ENCODE measurements at regions of chr15 and their contacts with region 1.

Region 1: DNA sequence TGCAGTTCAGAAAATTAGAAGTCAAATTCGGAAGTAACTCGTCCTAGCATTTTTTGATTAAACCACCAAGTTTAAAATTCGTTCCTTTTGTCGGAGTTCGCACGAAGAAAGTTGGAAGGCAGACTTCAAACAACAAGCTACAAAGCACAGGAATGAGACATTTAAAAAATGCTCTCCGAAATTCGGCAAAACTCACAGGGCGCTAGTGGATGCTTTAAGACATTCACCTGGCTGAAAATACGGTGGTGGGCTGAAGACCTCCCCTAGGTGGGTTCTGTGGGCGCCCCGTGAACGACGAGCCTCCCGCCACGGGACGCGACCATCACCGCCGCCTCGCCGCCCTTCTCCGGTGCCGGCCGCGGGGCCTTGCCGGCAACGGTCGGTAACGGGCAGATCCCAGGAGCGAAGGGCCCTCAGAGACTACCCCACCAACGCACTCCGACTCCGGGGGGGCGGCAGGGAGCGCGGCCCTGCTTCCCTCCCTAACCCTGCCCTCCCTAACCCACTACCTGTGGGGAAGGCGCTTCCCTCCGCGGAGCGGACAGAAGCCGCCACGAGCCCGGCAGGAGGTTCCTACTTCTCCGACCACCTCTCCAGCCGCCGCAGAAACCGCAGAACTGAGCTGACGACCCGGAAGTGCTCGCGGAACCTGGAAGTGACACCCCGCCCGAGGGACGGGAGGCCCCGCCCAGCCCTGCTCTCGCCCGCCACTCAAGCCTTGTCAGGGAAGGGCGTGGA is at the start of gene GTF2A2:
- DNase-seq: peak; percentile 98
- ATAC-seq: peak; percentile 100
- H3K4me3 Mint-ChIP-seq: no peak within 1 kb of the TSS
- H3K27ac Mint-ChIP-seq: peak within 1 kb of the TSS; percentile 90
- H3K4me1 Mint-ChIP-seq: peaks cover 8% of the 10 kb centered on the region
- H3K27me3 Mint-ChIP-seq: no peaks in the 10 kb centered on the region
- total RNA-seq, gene GTF2A2: 86.3 to 96.1 TPM

Region 2: DNA sequence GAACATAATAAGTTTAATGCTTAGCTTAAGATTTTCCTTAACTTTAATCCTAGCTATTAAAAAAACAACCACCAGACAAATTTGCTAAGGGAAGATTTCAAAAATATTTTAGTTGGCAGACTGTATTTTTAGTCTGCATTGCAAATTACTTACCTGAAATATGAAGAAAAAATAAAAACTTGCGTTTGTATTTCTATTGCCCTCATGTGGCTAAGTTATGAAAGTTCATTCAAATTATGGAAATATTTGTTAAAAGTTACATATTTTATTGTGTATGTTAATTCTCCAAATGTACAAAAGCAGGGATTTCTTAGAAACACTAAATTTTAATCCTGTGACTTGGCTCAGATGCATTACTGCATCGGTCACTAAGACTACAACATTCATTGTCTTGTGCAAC is 14.7 kb before region 1 on chr15:
- POLR2A ChIA-PET with region 1: no interaction called
- DNase-seq: no peak
- ATAC-seq: no peak
- H3K4me3 Mint-ChIP-seq: no peak overlapping the region
- H3K27ac Mint-ChIP-seq: no peak overlapping the region
- H3K4me1 Mint-ChIP-seq: peaks cover 4% of the 10 kb centered on the region
- H3K27me3 Mint-ChIP-seq: no peaks in the 10 kb centered on the region

Region 3: DNA sequence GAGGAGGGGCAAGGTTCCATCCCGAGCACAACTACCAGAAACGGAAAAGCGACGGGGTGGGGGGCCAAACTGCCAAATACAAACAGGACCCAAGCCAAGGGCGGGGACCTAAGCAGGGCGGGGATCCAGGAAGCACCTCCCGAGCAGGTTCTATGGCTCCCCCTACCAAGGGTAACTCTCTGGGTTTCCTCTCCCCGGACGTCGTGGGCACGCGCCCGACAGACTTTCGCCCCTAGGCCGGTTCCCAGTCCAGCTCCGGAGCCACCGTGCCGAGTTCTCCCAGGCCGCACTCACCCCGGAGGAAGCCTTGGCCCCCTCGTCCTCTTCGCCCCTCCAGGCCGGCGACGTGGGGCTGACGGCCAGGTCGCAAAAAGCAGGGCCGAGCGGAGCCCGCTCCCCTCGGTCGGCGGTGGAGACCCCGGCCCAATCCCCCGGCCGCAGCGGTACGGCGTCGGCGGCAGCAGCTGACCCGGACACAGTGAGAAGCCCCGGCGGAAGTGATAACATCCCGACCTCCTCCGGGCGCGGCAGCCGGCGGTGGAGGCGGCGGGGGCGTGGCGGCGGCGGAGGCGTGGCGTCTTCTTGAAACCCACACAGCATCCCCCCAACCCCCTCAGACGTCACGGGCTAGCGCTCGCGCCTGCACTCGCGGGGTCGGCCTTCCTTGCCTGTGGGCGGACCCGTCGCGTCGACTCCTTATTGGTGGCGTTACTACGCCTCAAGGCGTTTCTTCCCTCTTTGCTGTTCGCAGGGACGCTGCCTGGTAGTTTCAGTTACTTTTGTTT is 32.0 kb after region 1 on chr15 and contains the start of gene BNIP2:
- POLR2A ChIA-PET with region 1: interaction called, 30 read pairs
- DNase-seq: peak; percentile 99
- ATAC-seq: peak; percentile 90
- H3K4me3 Mint-ChIP-seq: peak within 1 kb of the TSS; percentile 93
- H3K27ac Mint-ChIP-seq: peak within 1 kb of the TSS; percentile 95
- H3K4me1 Mint-ChIP-seq: peaks cover 30% of the 10 kb centered on the region
- H3K27me3 Mint-ChIP-seq: no peaks in the 10 kb centered on the region
- total RNA-seq, gene BNIP2: 79.7 to 80.2 TPM

Region 4: DNA sequence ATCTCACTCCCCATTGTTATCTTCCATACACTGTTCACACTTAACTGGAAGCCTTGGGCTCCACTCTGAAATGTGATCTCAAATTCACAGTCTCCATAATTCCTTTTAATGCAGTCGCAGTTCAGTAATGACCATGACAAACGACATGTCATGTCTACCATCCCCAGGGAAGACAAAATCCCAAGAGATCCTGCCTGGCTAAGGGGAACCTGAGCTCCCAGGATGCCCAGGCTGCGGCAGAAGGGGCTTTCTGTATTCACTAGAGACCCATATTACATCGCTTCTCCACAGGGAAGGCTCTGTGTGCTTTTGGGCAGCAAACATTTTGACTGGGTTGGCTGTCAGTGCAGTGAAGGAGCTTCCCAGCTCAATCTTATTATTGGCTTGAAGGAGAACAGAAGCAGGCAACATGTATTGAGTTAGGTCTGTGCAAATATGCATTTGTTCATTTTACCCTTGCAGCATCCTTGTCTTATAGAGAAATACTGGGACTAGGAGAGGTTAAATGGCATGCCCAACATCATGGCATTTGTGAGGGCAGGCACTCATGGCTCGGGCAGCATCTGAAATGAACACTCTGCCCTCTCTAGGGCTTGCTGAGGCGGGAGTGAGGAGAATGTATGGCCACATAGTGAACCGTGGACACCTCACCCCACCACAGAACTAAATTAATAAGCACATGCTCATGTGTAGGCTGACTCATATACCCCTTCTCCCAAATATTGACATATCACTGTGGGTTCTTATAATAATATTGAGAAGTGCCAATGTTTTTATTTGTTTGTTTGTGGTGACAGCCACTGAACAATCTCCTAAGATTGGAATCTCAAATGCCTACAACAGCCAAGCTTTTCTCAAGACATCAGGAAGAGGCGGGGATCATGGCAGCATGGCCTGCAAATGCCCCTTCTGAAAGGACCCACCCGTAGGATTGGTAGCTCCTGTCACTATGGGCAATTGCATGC is 205.4 kb after region 1 on chr15:
- POLR2A ChIA-PET with region 1: no interaction called
- DNase-seq: no peak
- ATAC-seq: no peak
- H3K4me3 Mint-ChIP-seq: no peak overlapping the region
- H3K27ac Mint-ChIP-seq: no peak overlapping the region
- H3K4me1 Mint-ChIP-seq: no peaks in the 10 kb centered on the region
- H3K27me3 Mint-ChIP-seq: peaks cover 12% of the 10 kb centered on the region